ENCODE measurements at regions of chr4 and their contacts with region 1.

Region 1: GRCh38 chr4:174365018-174365587 is 81.4 kb downstream of the CEP44 start:
- DNase-seq: peak; percentile 30
- ATAC-seq: no peak
- H3K4me3 ChIP-seq: no peak overlapping the region
- H3K27ac ChIP-seq: no peak overlapping the region
- H3K4me1 ChIP-seq: no peaks in the 10 kb centered on the region
- H3K27me3 ChIP-seq: no peaks in the 10 kb centered on the region
- CTCF ChIP-seq: peak; percentile 40; the same call in 1 of the 2 replicates
- EP300 ChIP-seq: no peak
- POLR2A ChIP-seq: no peak
- RAD21 ChIP-seq: no peak

Region 2: GRCh38 chr4:174631901-174632758 is 267.0 kb after region 1 on chr4:
- CTCF ChIA-PET with region 1: interaction called, 43 read pairs
- POLR2A ChIA-PET with region 1: no interaction called
- in situ Hi-C with region 1: loop called (anchors 5 kb)
- intact Hi-C with region 1: loop called (anchors 1 kb)
- DNase-seq: peak; percentile 20
- ATAC-seq: peak; percentile 66; the same call in 1 of the 3 replicates
- H3K4me3 ChIP-seq: no peak overlapping the region
- H3K27ac ChIP-seq: no peak overlapping the region
- H3K4me1 ChIP-seq: no peaks in the 10 kb centered on the region
- H3K27me3 ChIP-seq: no peaks in the 10 kb centered on the region
- CTCF ChIP-seq: peak; percentile 61
- EP300 ChIP-seq: no peak
- POLR2A ChIP-seq: no peak
- RAD21 ChIP-seq: peak; percentile 40

Region 3: DNA sequence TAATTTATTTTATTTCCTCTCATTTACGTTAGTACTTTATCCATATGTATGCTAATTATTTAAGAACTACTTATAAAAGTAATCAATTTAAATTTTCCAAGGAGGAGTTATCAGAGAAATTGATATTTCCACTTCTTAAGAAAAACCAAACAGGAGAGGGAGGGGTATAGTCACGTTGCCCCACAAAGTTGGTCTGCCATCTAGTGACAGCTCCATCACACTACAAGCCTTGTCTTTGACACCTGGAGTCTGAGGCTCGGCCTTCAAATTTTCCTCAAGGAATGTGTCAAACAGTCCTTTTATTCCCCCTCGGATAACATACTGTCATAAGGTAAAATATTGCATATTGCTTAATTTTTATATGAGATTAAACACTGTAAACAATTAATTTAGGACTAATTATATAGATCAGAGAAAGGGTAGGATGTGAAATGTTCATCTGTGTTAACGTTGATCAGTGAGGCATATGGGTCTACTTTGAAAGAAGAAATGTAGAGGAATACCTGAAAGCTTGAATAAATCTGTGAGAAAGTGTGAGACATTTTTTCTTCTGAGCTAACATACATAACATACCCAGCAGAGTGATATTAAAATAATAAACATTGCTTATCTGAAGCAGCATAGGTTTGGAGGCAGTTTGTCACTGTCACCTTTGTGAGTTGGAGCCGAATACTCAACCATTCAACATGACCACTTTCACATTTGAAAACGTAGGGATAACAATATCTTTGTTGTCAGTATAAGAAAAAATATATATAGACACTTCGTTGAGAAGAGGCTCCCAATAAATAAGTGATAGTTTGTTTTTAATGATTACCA is 349.5 kb after region 1 on chr4:
- CTCF ChIA-PET with region 1: interaction called, 3 read pairs
- POLR2A ChIA-PET with region 1: no interaction called
- in situ Hi-C with region 1: loop called (anchors 5 kb)
- intact Hi-C with region 1: loop called (anchors 1 kb)
- DNase-seq: peak; percentile 17
- ATAC-seq: peak; percentile 86
- H3K4me3 ChIP-seq: no peak overlapping the region
- H3K27ac ChIP-seq: no peak overlapping the region
- H3K4me1 ChIP-seq: no peaks in the 10 kb centered on the region
- H3K27me3 ChIP-seq: no peaks in the 10 kb centered on the region
- CTCF ChIP-seq: peak; percentile 66
- EP300 ChIP-seq: no peak
- POLR2A ChIP-seq: no peak
- RAD21 ChIP-seq: no peak

Region 4: DNA sequence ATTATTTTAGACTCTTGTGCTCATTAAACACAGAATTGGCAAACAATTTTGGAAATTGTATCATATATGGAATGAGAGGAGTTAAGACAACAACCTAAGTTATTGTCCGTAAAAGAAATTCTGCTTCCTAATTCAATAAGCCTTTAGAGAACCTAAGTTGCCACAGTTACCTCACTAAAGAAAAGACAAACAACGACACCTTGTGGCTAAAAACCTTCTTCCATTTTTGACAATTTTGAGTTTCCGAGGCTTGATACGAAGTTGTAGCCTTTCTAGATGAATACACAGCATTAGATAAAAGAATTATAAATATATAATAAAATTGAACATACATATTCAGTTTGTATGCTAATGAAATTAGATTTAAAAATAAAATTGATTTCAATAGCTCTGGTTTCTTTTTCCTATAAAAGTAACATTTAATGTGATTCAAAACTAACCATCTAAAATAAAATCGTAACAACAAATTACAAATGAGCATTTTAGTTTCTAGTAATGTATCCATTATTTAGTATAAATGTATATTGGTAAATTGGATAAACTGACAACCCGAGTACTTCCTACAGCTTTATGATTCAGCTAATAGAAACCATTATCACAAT is 1171.8 kb after region 1 on chr4:
- CTCF ChIA-PET with region 1: no interaction called
- POLR2A ChIA-PET with region 1: no interaction called
- in situ Hi-C with region 1: no loop called
- intact Hi-C with region 1: loop called (anchors 10 kb)
- DNase-seq: peak; percentile 35
- ATAC-seq: no peak; the same call in 2 of the 3 replicates
- H3K4me3 ChIP-seq: no peak overlapping the region
- H3K27ac ChIP-seq: no peak overlapping the region
- H3K4me1 ChIP-seq: peaks cover 9% of the 10 kb centered on the region
- H3K27me3 ChIP-seq: no peaks in the 10 kb centered on the region
- CTCF ChIP-seq: peak; percentile 59
- EP300 ChIP-seq: no peak
- POLR2A ChIP-seq: no peak
- RAD21 ChIP-seq: no peak; the same call in 1 of the 2 replicates